Esophagus muscularis mucosa (tissue), 4 donors: ENCODE measurements at regions of chr17 and their contacts with region 1.

Region 1: DNA sequence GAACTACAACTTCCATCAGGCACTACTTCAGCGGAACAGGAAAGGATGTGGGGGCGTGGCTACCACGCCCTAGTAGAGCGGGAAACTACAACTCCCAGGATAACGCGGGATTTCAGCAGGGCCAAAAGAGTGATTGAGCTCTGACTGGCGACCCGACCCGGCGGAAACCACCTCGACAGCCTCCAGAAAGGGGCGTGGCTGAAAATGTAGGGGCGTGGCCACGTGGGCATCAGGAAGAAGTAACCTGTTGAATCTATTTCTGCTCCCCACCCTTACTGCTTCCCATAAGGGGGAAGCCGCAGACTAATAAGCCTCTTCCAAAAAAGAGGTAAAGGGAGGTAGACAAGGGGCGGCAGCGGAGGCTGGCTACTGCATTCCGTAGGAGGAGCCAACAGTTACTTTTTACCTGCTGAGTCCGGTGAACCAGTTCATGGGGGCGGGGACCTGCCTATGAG is at the start of gene TMEM102:
- DNase-seq: peak; percentile 98
- H3K4me3 ChIP-seq: peak within 1 kb of the TSS; percentile 41 to 62 (median 46)
- H3K27ac ChIP-seq: peak within 1 kb of the TSS; percentile 27 to 56 (median 40)
- H3K4me1 ChIP-seq: peaks cover 50 to 57% (median 55%) of the 10 kb centered on the region in 4 donors
- H3K27me3 ChIP-seq: peaks cover 0 to 76% (median 25%) of the 10 kb centered on the region in 4 donors
- CTCF ChIP-seq: no peak
- EP300 ChIP-seq: no peak
- POLR2A ChIP-seq: no peak
- total RNA-seq, gene TMEM102: 1.2 to 6.1 (median 3.5) TPM

Region 2: DNA sequence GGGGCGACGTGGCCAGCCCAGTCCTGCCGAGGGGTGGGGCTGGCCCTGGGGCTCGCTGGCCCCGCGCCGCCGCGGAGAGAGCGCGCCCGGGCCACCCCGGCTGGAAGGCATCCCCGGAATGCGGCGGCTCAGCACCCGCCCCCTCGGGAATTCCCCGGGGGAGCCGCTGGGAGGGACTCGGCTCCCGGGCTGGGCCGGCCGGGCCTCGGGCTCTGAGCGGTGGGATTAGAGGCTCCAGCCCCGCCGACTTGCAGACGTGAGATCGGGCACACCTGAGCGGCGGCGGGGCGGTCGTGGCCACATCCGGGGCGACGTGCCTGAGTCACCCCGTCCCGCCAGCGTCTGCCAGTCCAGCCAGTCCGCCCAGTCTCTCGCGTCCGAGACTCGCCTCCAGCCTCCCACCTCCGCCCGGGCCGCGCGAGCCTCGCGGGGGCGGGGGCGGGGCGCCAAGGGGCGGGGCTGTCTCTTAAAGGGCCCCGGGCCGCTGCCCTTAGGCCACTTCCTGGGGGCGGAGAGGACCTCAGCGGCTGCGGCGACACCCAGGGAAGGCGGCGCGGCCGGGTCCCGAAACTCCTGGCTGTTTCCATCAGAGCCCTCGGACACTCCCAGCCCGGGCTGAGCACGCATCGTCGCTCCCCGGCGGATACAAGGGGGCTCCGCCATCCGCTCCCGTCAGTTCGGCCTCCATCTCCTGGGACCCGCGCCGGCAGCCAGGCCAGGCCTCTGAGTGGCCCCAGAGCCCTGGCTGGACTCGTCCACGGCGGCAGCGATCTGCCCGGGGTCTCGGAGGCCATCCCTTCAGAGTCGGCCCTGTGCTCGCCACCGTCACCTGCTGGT is 83.4 kb before region 1 on chr17 and contains the start of gene KCTD11:
- intact Hi-C with region 1: loop called (anchors 2 kb)
- DNase-seq: peak; percentile 96
- H3K4me3 ChIP-seq: peak within 1 kb of the TSS; percentile 86 to 98 (median 90)
- H3K27ac ChIP-seq: peak within 1 kb of the TSS; percentile 98 to 100 (median 99)
- H3K4me1 ChIP-seq: peaks cover 24 to 77% (median 71%) of the 10 kb centered on the region in 4 donors
- H3K27me3 ChIP-seq: no peaks in the 10 kb centered on the region
- CTCF ChIP-seq: peak; percentile 47 to 74 (median 61)
- EP300 ChIP-seq: no peak
- POLR2A ChIP-seq: peak; percentile 22
- total RNA-seq, gene KCTD11: 9.1 to 18.2 (median 13.3) TPM

Region 3: DNA sequence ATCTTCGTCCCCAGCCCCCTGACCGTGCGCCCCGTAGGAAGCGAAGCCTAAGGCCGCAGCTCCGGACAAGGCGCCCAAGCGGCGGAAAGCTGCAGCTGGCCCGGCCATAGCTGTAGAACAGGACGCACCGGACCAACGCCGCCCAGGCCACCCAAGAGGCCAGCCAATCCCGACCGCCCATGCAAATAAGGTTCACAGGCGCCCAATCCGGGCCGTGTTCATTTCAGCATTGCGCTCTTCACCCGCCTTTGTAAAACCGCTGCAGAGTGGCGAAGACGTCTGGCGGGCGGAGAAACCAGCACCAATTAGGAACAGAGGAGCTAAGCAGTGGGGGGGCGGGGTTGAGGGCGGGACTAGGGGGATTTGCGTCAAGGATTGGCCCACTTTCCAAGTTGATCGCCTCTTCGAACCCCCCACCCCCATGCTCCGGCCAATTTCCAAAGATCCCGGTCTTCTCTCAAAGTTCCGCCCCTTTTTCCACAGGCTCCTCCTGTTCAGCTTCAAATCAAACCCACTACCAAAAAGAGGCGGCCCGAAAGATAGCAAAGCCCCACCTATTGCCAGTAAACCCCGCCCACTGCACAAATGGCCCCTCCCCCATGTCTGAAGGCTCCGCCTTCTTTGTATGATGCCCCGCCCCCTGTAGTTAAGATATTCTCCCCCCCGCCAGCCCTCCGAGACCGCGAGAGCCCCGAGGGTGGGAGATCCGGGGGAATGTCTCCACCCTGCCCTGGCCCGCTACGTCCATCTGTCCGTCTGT is 31.1 kb before region 1 on chr17 and contains the start of gene TMEM256:
- intact Hi-C with region 1: loop called (anchors 2 kb)
- DNase-seq: peak; percentile 100
- H3K4me3 ChIP-seq: peak within 1 kb of the TSS; percentile 77 to 87 (median 85)
- H3K27ac ChIP-seq: peak within 1 kb of the TSS; percentile 90 to 93 (median 92)
- H3K4me1 ChIP-seq: peaks cover 20 to 56% (median 39%) of the 10 kb centered on the region in 4 donors
- H3K27me3 ChIP-seq: no peaks in the 10 kb centered on the region
- CTCF ChIP-seq: peak in 1 of 3 experiments; percentile 9
- EP300 ChIP-seq: no peak
- POLR2A ChIP-seq: peak; percentile 89
- total RNA-seq, gene TMEM256: 59.6 to 121 (median 74.7) TPM

Region 4: DNA sequence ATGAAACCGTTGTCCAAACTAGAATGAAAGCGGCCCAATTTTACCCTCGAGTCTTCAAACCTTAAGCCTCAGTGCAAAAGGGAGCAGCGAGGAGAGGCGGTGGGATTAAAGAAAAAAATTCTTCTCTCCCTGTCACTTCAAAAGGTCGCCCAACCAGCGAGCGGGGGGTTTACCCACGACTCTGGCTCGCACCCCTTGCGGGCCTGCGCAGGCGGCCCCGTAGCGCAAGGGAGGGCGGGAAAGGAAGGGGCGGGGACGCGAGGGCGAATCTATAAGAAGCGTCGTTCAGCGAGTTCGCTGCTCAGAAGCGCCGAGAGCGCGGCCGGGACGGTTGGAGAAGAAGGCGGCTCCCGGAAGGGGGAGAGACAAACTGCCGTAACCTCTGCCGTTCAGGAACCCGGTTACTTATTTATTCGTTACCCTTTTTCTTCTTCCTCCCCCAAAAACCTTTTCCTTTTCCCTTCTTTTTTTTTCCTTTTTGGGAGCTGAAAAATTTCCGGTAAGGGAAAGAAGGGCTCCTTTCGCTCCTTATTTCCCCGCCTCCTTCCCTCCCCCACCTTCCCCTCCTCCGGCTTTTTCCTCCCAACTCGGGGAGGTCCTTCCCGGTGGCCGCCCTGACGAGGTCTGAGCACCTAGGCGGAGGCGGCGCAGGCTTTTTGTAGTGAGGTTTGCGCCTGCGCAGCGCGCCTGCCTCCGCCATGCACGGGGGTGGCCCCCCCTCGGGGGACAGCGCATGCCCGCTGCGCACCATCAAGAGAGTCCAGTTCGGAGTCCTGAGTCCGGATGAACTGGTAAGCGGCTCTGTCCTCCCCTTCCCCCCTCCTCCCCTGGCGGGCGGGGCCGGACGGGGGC is 49.0 kb after region 1 on chr17 and contains the start of gene POLR2A:
- intact Hi-C with region 1: loop called (anchors 5 kb)
- DNase-seq: peak; percentile 99
- H3K4me3 ChIP-seq: peak within 1 kb of the TSS; percentile 52 to 92 (median 70)
- H3K27ac ChIP-seq: peak within 1 kb of the TSS; percentile 100
- H3K4me1 ChIP-seq: peaks cover 57 to 81% (median 80%) of the 10 kb centered on the region in 4 donors
- H3K27me3 ChIP-seq: peaks cover 0 to 3% (median 0%) of the 10 kb centered on the region in 4 donors
- CTCF ChIP-seq: peak in 1 of 3 experiments; percentile 12
- EP300 ChIP-seq: no peak
- POLR2A ChIP-seq: peak; percentile 100
- total RNA-seq, gene POLR2A: 29.5 to 66.4 (median 46.9) TPM

Region 5: DNA sequence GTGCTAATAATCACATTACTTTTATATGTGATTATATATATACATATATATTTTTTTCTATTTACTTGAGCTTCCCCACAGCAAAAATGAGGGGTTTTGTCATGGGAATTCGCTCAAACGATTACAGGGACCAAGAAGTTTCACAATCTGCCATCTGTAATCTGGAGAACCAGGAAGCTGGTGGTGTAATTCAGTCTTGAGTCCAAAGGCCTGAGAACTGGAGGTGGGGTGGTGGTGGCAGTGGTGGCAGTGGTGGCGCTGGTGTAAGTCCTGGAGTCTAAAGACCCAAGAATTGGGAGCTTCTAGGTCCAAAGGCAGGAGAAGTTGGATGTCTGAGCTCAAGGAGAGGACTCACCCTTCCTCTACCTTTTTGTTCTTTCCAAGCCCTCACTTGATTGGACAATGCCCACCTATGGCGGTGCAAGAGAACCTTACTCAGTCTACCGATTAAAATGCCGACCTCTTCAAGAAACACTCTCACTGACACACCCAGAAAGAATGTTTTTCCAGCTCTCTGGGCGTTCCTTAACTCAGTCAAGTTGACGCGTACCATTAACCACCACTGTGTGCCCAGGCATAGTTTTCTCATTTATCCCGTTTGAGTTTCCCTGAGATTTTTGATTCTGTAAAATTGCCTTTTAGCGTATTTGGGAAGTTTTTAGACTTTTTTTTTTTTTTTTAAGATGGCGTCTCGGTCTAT is 80.8 kb after region 1 on chr17:
- intact Hi-C with region 1: no loop called
- DNase-seq: no peak
- H3K4me3 ChIP-seq: no peak overlapping the region
- H3K27ac ChIP-seq: no peak overlapping the region
- H3K4me1 ChIP-seq: peaks cover 0 to 6% (median 0%) of the 10 kb centered on the region in 4 donors
- H3K27me3 ChIP-seq: no peaks in the 10 kb centered on the region
- CTCF ChIP-seq: no peak
- EP300 ChIP-seq: no peak
- POLR2A ChIP-seq: no peak